ENCODE measurements at regions of chr17 and their contacts with region 1.

Region 1: GRCh38 chr17:50783193-50783660 is 15.9 kb upstream of the ANKRD40CL start:
- DNase-seq: peak; percentile 87
- ATAC-seq: peak; percentile 96
- H3K4me3 Mint-ChIP-seq: no peak overlapping the region
- H3K27ac Mint-ChIP-seq: no peak overlapping the region
- H3K4me1 Mint-ChIP-seq: peaks cover 23% of the 10 kb centered on the region
- H3K27me3 Mint-ChIP-seq: peaks cover 2% of the 10 kb centered on the region
- CTCF ChIP-seq: peak; percentile 95

Region 2: DNA sequence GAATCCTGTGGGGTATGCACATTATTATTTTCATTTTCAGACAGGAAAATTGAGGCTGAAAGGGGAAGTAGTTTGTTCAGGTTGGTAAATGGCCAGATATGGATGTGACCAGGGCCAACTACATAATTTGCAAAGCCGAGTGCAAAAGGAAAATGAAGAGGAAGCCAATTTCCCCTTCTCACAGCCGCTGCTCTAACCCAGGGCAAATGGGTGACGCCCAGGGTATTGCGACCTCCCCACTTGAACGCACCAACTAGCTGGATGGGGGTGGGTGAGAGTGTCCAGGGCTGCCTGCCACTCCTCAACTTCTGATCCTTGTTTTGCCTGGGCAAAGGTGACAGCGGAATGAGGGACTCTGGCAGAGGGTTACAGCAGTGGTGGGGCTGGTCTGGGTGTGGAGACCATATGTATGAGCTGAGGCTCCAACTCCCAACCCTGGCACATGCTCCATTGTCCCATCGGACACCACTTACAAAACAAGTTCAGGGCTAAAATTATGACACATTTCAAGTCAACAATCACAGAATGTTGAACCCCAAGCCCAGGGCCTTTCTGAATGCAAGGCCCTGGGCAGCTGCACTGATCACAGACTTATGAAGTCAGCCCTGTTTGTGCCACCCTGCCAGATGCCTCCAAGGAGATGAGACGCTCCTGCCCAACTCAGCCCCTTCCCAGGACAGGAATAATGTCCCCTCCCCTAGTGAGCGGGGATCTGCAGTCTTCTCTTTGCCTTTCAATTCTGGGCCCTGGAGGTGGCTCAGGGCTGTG is 17.6 kb before region 1 on chr17:
- CTCF ChIA-PET with region 1: interaction called, 49 read pairs
- POLR2A ChIA-PET with region 1: no interaction called
- intact Hi-C with region 1: no loop called
- DNase-seq: no peak
- ATAC-seq: no peak
- H3K4me3 Mint-ChIP-seq: no peak overlapping the region
- H3K27ac Mint-ChIP-seq: no peak overlapping the region
- H3K4me1 Mint-ChIP-seq: peaks cover 6% of the 10 kb centered on the region
- H3K27me3 Mint-ChIP-seq: peaks cover 4% of the 10 kb centered on the region
- CTCF ChIP-seq: no peak

Region 3: DNA sequence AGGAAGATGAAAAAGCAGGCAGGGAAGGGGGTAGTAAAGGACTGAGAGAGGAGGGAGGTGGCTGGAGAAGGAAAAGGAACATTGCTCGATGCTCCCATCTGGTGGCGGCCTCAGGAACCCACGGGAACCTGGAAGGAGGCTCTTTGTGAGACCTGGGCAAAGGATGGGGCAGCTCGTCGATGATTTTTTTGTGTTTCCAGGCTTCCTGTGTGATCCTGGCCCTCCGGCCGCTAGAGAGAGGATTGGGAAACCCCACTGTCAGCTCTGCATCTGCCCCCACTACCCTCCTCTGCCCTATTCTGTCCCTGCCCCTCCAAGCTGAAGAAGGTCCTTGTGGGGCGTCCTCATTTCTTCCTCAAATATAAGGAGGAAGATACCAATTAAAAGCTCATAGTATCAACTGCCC is 58.7 kb after region 1 on chr17:
- CTCF ChIA-PET with region 1: interaction called, 23 read pairs
- POLR2A ChIA-PET with region 1: interaction called, 3 read pairs
- intact Hi-C with region 1: loop called (anchors 5 kb)
- DNase-seq: peak; percentile 73
- ATAC-seq: peak; percentile 86
- H3K4me3 Mint-ChIP-seq: no peak overlapping the region
- H3K27ac Mint-ChIP-seq: no peak overlapping the region
- H3K4me1 Mint-ChIP-seq: no peaks in the 10 kb centered on the region
- H3K27me3 Mint-ChIP-seq: no peaks in the 10 kb centered on the region
- CTCF ChIP-seq: peak; percentile 61

Region 4: GRCh38 chr17:50861071-50861676 is 77.9 kb after region 1 on chr17:
- CTCF ChIA-PET with region 1: interaction called, 12 read pairs
- POLR2A ChIA-PET with region 1: interaction called, 4 read pairs
- intact Hi-C with region 1: no loop called
- DNase-seq: no peak
- ATAC-seq: no peak
- H3K4me3 Mint-ChIP-seq: no peak overlapping the region
- H3K27ac Mint-ChIP-seq: no peak overlapping the region
- H3K4me1 Mint-ChIP-seq: peaks cover 26% of the 10 kb centered on the region
- H3K27me3 Mint-ChIP-seq: no peaks in the 10 kb centered on the region
- CTCF ChIP-seq: no peak

Region 5: GRCh38 chr17:50956750-50957523 is 173.7 kb after region 1 on chr17:
- CTCF ChIA-PET with region 1: interaction called, 23 read pairs
- POLR2A ChIA-PET with region 1: no interaction called
- intact Hi-C with region 1: loop called (anchors 10 kb)
- DNase-seq: peak; percentile 76
- ATAC-seq: peak; percentile 94
- H3K4me3 Mint-ChIP-seq: no peak overlapping the region
- H3K27ac Mint-ChIP-seq: no peak overlapping the region
- H3K4me1 Mint-ChIP-seq: peaks cover 2% of the 10 kb centered on the region
- H3K27me3 Mint-ChIP-seq: no peaks in the 10 kb centered on the region
- CTCF ChIP-seq: peak; percentile 79

Region 6: DNA sequence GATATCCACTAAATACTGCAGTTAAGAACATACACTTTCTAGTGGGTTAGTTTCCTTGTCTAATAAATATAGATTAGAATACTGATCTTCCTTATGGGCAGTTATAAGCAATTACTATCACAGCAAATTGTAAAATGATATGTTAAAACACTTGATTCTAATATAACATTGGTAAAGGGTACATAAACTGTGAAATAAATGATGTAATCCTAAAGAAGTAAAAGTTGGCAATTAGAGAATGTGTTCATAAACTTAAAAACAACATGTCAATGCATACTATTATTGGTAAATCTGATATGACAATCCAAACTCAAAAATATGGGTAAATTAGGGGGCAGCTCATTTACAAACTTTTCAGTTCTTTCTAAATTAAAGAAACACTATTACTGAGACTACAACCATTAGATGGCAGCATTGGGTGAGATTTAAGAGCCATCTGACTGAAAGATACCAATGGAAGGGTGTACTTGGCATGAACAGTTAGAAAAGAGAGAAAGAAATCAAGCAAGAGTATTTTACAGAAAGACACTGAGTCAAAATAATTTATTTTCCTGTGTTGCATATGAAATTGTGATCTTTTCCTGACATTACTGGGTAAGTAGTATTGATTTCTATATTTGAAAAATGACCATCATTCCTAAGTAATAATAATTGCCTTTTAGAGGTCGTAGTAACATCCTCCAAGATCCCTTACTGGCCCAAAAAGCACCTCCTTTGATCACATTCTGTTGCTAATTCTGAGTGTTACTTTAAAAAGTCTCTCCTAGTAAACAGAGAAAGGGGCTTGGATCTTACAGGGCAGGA is 217.8 kb after region 1 on chr17:
- CTCF ChIA-PET with region 1: interaction called, 15 read pairs
- POLR2A ChIA-PET with region 1: no interaction called
- intact Hi-C with region 1: no loop called
- DNase-seq: no peak
- ATAC-seq: peak; percentile 78
- H3K4me3 Mint-ChIP-seq: no peak overlapping the region
- H3K27ac Mint-ChIP-seq: peak overlapping the region; percentile 28
- H3K4me1 Mint-ChIP-seq: no peaks in the 10 kb centered on the region
- H3K27me3 Mint-ChIP-seq: no peaks in the 10 kb centered on the region
- CTCF ChIP-seq: peak; percentile 69

Measured in activated CD8-positive, alpha-beta T cell treated with anti-CD3 and anti-CD28 coated beads for 36 hours (primary cell).